ENCODE measurements at regions of chr10 and their contacts with region 1.

Region 1: DNA sequence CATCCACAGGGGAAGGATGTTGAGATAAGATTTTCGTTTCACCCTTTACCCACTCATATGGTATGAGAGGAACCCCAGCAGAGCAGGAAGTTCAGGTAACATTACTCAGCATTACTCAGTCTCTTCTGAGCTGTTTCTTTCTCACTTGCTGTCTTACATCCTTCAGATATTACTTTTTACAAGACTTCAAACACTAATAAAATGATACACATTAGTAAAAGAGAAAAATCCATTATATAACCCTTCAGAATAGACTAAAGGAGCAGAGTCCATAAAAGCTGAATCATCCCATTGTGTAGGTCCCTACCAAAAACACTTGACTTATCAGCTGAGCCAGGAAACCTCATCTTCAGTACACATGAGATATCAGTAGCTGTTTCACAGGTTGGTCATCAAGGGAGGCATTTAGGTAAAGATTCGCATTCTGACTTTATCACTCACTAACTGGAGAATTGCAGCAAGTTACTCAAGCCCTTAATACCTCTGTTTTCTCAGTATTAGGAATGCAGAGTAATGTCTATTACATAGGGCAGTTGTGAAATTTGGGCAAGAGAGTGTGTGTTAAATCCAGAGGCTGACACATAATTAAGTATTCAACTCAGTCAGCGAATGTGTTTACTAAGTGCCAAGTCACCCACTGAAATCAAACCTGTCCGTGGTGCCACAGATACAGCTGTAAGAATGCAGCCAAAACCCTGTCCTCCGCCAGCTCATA is 44.7 kb downstream of the KLF6 start:
- DNase-seq: no peak
- H3K4me3 ChIP-seq: no peak overlapping the region
- H3K27ac ChIP-seq: no peak overlapping the region
- H3K4me1 ChIP-seq: no peaks in the 10 kb centered on the region
- H3K27me3 ChIP-seq: no peaks in the 10 kb centered on the region
- CTCF ChIP-seq: no peak
- EP300 ChIP-seq: no peak
- POLR2A ChIP-seq: no peak

Region 2: DNA sequence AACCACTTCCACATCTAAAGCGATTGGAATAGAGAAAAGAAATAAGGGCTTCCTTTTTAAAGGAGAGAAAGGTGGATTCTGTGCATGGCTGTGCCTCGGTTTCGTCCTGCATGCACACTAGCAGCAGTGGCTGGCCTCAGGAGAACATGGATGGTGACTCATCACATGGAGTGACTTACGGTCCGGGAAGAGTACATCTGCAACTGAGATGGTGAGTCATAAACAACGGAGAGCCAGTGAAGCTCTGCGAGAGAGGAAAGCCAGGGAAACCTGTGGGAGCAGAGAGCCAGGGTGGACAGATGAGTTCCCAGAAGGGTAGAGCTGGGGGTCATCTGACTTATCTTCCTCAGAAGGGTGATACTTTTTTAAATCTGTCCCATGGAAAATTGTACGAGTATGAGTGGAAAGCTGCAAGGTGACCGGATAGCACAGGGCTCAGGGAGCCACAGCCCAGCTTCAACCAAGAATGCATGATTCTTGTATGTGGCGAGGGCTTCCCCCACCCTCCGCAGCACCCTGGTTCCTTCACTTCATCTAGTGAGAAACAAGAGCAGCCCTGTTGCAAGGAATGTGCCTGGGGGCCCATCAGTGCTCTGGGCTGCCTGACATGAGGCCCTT is 214.4 kb before region 1 on chr10:
- intact Hi-C with region 1: loop called (anchors 10 kb)
- DNase-seq: peak; percentile 80
- H3K4me3 ChIP-seq: no peak overlapping the region
- H3K27ac ChIP-seq: peak overlapping the region; percentile 67 to 82 (median 75)
- H3K4me1 ChIP-seq: peaks cover 0 to 38% (median 21%) of the 10 kb centered on the region in 4 donors
- H3K27me3 ChIP-seq: no peaks in the 10 kb centered on the region
- CTCF ChIP-seq: no peak
- EP300 ChIP-seq: peak in 1 of 4 donors; percentile 85
- POLR2A ChIP-seq: no peak

Region 3: DNA sequence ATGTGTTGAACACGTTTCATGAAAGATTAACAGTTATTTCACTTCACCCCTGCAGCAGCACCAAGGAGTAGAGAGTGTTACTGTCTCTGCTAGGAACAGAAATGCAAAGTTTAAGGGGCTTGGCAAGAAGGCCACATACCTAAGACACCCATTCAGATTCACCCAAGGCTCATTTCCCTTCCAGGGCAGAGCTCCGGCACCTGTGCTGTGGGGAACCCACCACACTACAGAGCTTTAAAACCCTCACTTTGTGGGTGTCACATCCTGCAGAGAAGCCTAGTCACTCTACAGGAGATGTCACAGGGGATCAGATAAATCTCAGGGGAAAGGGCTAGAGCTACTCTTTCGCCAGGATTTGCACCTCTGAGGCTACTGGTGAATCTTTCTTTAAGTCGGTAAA is 220.8 kb after region 1 on chr10:
- intact Hi-C with region 1: no loop called
- DNase-seq: no peak
- H3K4me3 ChIP-seq: no peak overlapping the region
- H3K27ac ChIP-seq: no peak overlapping the region
- H3K4me1 ChIP-seq: no peaks in the 10 kb centered on the region
- H3K27me3 ChIP-seq: no peaks in the 10 kb centered on the region
- CTCF ChIP-seq: no peak
- EP300 ChIP-seq: no peak
- POLR2A ChIP-seq: no peak